Aorta (tissue), 5 donors: ENCODE measurements at regions of chr5 and their contacts with region 1.

Region 1: GRCh38 chr5:174990909-174991308 is 266.5 kb downstream of the MSX2 start:
- DNase-seq: peak in 1 of 2 donors; percentile 78
- ATAC-seq: peak; percentile 88
- H3K4me3 ChIP-seq: peak overlapping the region in 1 of 2 donors; percentile 36
- H3K27ac ChIP-seq: peak overlapping the region in 1 of 2 donors; percentile 88
- H3K4me1 ChIP-seq: peaks cover 2 to 9% of the 10 kb centered on the region in 2 donors
- H3K27me3 ChIP-seq: no peaks in the 10 kb centered on the region

Region 2: GRCh38 chr5:175045820-175046219 is 54.9 kb after region 1 on chr5:
- intact Hi-C with region 1: loop called in 1 of 2 experiments (anchors 5 kb)
- DNase-seq: peak in 1 of 2 donors; percentile 61
- ATAC-seq: no peak
- H3K4me3 ChIP-seq: no peak overlapping the region
- H3K27ac ChIP-seq: peak overlapping the region in 1 of 2 donors; percentile 67
- H3K4me1 ChIP-seq: peaks cover 0 to 3% of the 10 kb centered on the region in 2 donors
- H3K27me3 ChIP-seq: no peaks in the 10 kb centered on the region

Region 3: DNA sequence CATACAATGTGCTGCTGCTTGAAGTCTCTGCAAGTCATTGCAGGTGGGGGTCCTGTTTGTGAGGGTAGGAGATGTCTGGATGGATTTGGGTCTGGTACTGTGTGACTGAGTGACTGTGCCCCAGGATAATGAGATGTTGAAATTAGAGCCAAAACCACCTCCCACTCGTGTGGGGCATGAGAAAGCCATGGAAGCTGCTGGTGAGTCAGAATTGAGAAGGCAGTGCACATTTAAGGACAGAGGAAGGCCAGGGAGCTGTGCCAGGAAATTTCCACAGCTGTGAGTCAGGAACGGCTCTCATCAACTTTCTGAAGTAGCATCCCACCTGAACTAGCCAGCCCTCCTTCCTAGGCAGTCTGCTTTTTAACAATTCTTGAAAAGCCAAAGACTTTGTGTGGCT is 223.2 kb after region 1 on chr5:
- intact Hi-C with region 1: loop called in 1 of 2 experiments (anchors 5 kb)
- DNase-seq: peak; percentile 89 to 91
- ATAC-seq: no peak
- H3K4me3 ChIP-seq: no peak overlapping the region
- H3K27ac ChIP-seq: peak overlapping the region in 1 of 2 donors; percentile 29
- H3K4me1 ChIP-seq: peaks cover 5 to 9% of the 10 kb centered on the region in 2 donors
- H3K27me3 ChIP-seq: no peaks in the 10 kb centered on the region